Adrenal gland (tissue), 19 donors: ENCODE measurements at regions of chr11 and their contacts with region 1.

Region 1: GRCh38 chr11:118705111-118705741 is 25.8 kb upstream of the TREH start:
- DNase-seq: peak in 2 of 7 donors; percentile 23 to 52
- H3K4me3 ChIP-seq: no peak overlapping the region
- H3K27ac ChIP-seq: peak overlapping the region in 1 of 5 donors; percentile 18
- H3K4me1 ChIP-seq: peaks cover 0 to 7% of the 10 kb centered on the region in 2 donors
- H3K27me3 ChIP-seq: no peaks in the 10 kb centered on the region
- CTCF ChIP-seq: no peak
- POLR2A ChIP-seq: no peak

Region 2: GRCh38 chr11:118531340-118532084 is 173.7 kb before region 1 on chr11:
- intact Hi-C with region 1: no loop called
- DNase-seq: peak in 3 of 7 donors; percentile 30 to 39 (median 32)
- H3K4me3 ChIP-seq: peak overlapping the region in 3 of 4 donors; percentile 41 to 97 (median 66)
- H3K27ac ChIP-seq: peak overlapping the region in 3 of 5 donors; percentile 72 to 87 (median 86)
- H3K4me1 ChIP-seq: peaks cover 0 to 11% of the 10 kb centered on the region in 2 donors
- H3K27me3 ChIP-seq: no peaks in the 10 kb centered on the region
- CTCF ChIP-seq: no peak
- POLR2A ChIP-seq: no peak

Region 3: GRCh38 chr11:118859973-118860372 is 154.7 kb after region 1 on chr11:
- intact Hi-C with region 1: loop called in 1 of 2 experiments (anchors 10 kb)
- DNase-seq: no peak
- H3K4me3 ChIP-seq: no peak overlapping the region
- H3K27ac ChIP-seq: no peak overlapping the region
- H3K4me1 ChIP-seq: no peaks in the 10 kb centered on the region
- H3K27me3 ChIP-seq: no peaks in the 10 kb centered on the region
- CTCF ChIP-seq: no peak
- POLR2A ChIP-seq: no peak